A673 (cell line): ENCODE measurements at regions of chr4 and their contacts with region 1.

Region 1: GRCh38 chr4:123127218-123127617 is 204.8 kb upstream of the NUDT6 start:
- DNase-seq: peak; percentile 55
- H3K4me3 ChIP-seq: no peak overlapping the region
- H3K27ac ChIP-seq: peak overlapping the region; percentile 72
- H3K4me1 ChIP-seq: peaks cover 23% of the 10 kb centered on the region
- H3K27me3 ChIP-seq: no peaks in the 10 kb centered on the region
- CTCF ChIP-seq: peak; percentile 62; the same call in 1 of the 2 replicates

Region 2: GRCh38 chr4:122218762-122219161 is 908.5 kb before region 1 on chr4:
- CTCF ChIA-PET with region 1: no interaction called
- POLR2A ChIA-PET with region 1: no interaction called
- intact Hi-C with region 1: no loop called
- DNase-seq: peak; percentile 40
- H3K4me3 ChIP-seq: no peak overlapping the region
- H3K27ac ChIP-seq: no peak overlapping the region
- H3K4me1 ChIP-seq: no peaks in the 10 kb centered on the region
- H3K27me3 ChIP-seq: no peaks in the 10 kb centered on the region
- CTCF ChIP-seq: peak; percentile 50

Region 3: GRCh38 chr4:123524958-123525628 is 397.9 kb after region 1 on chr4:
- CTCF ChIA-PET with region 1: no interaction called
- POLR2A ChIA-PET with region 1: no interaction called
- intact Hi-C with region 1: no loop called
- DNase-seq: no peak
- H3K4me3 ChIP-seq: no peak overlapping the region
- H3K27ac ChIP-seq: no peak overlapping the region
- H3K4me1 ChIP-seq: peaks cover 16% of the 10 kb centered on the region
- H3K27me3 ChIP-seq: no peaks in the 10 kb centered on the region
- CTCF ChIP-seq: no peak

Region 4: DNA sequence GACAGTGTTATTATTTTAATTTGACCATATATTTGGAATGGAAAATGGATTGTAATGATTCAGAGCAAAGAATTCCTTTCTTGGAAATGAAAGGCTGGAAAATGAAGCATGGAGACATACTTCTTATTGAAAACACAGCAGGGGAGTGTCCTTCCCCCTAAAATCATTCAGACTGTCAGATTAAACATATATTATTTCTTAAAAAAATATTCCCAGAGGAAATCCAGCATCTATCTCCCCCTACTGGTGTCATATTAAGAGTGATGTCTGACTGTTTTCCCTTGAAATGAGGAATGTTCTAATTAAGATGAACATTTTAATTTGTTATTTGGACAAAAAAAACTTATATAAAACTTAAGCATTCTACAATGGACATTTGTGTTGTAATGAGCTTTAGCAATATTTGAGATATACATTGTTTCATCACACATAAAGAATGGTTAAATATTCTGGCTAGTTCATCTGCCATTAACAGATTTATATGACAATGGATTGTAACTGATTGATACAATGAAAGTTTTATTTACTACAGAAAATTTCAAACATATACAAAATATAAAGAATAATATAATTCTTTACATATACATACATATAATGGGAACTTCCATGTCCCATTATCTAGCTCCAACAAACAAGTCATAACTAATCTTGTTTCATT is 534.0 kb after region 1 on chr4:
- CTCF ChIA-PET with region 1: no interaction called
- POLR2A ChIA-PET with region 1: no interaction called
- intact Hi-C with region 1: loop called (anchors 2 kb)
- DNase-seq: peak; percentile 46
- H3K4me3 ChIP-seq: no peak overlapping the region
- H3K27ac ChIP-seq: no peak overlapping the region
- H3K4me1 ChIP-seq: peaks cover 7% of the 10 kb centered on the region
- H3K27me3 ChIP-seq: no peaks in the 10 kb centered on the region
- CTCF ChIP-seq: peak; percentile 68

Region 5: GRCh38 chr4:123767806-123768205 is 640.6 kb after region 1 on chr4:
- CTCF ChIA-PET with region 1: interaction called, 5 read pairs
- POLR2A ChIA-PET with region 1: no interaction called
- intact Hi-C with region 1: loop called (anchors 5 kb)
- DNase-seq: no peak
- H3K4me3 ChIP-seq: no peak overlapping the region
- H3K27ac ChIP-seq: no peak overlapping the region
- H3K4me1 ChIP-seq: no peaks in the 10 kb centered on the region
- H3K27me3 ChIP-seq: no peaks in the 10 kb centered on the region
- CTCF ChIP-seq: no peak